Psoas muscle (tissue), 8 donors: ENCODE measurements at regions of chr2 and their contacts with region 1.

Region 1: GRCh38 chr2:197434541-197435513 is at the start of gene SF3B1:
- DNase-seq: peak; percentile 98 to 99
- ATAC-seq: peak; percentile 98 to 99 (median 99)
- H3K4me3 ChIP-seq: peak within 1 kb of the TSS; percentile 97
- H3K27ac ChIP-seq: peak within 1 kb of the TSS; percentile 99
- H3K4me1 ChIP-seq: peaks cover 45% of the 10 kb centered on the region
- H3K27me3 ChIP-seq: no peaks in the 10 kb centered on the region
- CTCF ChIP-seq: no peak
- total RNA-seq, gene SF3B1: 112 to 162 (median 142) TPM

Region 2: DNA sequence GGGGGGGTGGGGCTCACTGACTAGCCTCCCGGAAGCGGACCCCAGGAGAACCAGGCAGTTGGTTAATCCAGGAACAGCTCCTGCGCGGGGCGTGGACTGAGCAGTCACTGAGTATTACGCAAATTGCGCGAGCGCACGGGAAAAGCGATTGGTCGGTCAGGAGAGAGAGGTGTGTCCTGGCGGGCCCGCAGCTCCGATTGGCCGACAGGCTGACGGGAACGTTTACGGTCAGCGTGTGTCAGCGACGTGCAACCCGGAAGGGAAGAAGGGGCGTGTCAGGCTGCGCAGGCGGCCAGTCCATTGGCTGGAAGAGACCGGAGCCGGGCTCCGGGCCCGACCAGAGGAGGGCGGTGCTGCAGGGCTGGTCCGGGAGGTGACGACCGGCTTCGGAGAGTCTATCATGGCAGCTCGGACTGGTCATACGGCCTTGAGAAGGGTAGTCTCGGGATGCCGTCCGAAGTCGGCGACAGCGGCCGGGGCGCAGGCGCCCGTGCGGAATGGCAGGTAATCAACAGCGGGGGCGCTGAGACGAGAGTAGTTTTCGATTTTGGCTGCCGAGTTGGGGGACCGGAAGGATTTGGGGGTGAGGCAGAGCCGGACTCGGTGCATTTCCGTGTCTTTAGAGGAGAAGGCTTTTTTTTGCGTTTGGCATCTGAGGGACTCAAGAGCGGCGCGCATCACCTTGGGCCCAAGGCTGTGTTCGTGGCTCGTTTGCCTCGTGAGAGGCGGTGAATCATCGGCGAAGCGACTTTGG is 18.5 kb after region 1 on chr2 and contains the start of gene COQ10B:
- intact Hi-C with region 1: loop called (anchors 1 to 2 kb)
- DNase-seq: peak; percentile 99 to 100
- ATAC-seq: peak; percentile 94 to 97 (median 96)
- H3K4me3 ChIP-seq: peak within 1 kb of the TSS; percentile 78
- H3K27ac ChIP-seq: peak within 1 kb of the TSS; percentile 99
- H3K4me1 ChIP-seq: peaks cover 16% of the 10 kb centered on the region
- H3K27me3 ChIP-seq: no peaks in the 10 kb centered on the region
- CTCF ChIP-seq: peak; percentile 21
- total RNA-seq, gene COQ10B: 9.9 to 20.2 (median 18.5) TPM

Region 3: DNA sequence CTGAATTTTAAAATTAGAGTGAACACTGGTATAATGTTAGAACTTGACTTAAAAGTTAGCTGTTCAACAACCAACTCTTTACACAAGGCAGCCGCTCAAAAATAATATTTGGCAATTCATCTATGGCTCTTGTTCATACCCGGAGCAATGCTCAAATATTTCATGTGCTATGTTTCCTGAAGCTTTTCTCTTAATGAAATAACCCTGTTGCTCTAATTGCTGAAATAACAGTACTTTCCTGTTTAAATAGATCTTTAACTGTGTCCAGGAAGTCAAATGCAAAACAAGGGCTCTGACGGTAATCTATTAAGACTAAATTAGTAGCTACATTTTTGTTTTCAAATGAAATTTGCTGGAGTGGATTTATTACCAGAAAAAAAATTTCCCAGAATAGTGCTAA is 206.8 kb after region 1 on chr2:
- intact Hi-C with region 1: no loop called
- DNase-seq: no peak
- ATAC-seq: no peak
- H3K4me3 ChIP-seq: no peak overlapping the region
- H3K27ac ChIP-seq: no peak overlapping the region
- H3K4me1 ChIP-seq: no peaks in the 10 kb centered on the region
- H3K27me3 ChIP-seq: no peaks in the 10 kb centered on the region
- CTCF ChIP-seq: no peak